ENCODE measurements at regions of chr1 and their contacts with region 1.

Region 1: GRCh38 chr1:155622191-155622590 is 12.2 kb downstream of the MSTO1 start:
- DNase-seq: no peak
- ATAC-seq: no peak
- H3K4me3 ChIP-seq: no peak overlapping the region
- H3K4me3 Mint-ChIP-seq: no peak overlapping the region
- H3K27ac ChIP-seq: no peak overlapping the region
- H3K27ac Mint-ChIP-seq: no peak overlapping the region
- H3K4me1 ChIP-seq: no peaks in the 10 kb centered on the region
- H3K4me1 Mint-ChIP-seq: no peaks in the 10 kb centered on the region
- H3K27me3 ChIP-seq: no peaks in the 10 kb centered on the region
- H3K27me3 Mint-ChIP-seq: no peaks in the 10 kb centered on the region
- CTCF ChIP-seq: no peak

Region 2: DNA sequence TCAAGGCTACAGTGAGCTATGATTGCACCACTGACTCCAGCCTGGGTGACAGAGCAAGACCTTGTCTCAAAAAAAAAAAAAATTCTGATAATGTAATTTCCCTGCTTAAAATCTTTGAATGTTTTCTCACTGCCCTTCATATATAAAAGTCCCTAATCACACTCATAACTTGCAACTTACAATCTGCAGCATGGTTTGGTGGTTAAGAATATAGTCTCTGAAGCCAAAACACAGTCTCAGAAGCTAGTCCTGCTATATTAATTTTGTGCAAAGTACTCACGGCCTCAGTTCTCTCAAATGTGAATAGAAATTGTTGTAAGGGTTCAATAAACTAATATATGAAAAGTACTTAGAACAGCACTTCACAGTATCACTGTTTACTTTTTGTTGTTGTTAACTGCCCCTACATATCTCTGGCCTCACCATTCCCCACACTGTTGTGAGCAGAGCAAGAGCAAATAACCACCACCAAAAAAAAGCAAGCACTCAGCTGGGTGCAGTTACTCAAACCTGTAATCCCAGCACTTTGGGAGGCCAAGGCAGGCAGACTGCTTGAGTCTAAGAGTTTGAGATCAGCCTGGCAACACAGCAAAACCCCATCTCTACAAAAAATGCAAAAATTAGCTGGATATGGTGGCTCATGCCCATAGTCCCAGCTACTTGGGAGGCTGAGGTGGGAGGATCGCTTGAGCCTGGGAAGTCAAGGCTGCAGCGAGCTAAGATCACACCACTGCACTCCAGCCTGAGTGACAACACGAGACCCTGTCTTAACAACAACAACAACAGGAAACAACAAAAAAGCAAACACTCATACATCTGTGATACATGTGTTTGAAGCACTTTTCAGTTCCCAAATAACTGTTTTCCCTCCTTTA is 82.0 kb before region 1 on chr1:
- CTCF ChIA-PET with region 1: no interaction called
- POLR2A ChIA-PET with region 1: no interaction called
- intact Hi-C with region 1: no loop called
- DNase-seq: peak in 1 of 9 experiments; percentile 26
- ATAC-seq: no peak
- H3K4me3 ChIP-seq: no peak overlapping the region
- H3K4me3 Mint-ChIP-seq: peak overlapping the region; percentile 27
- H3K27ac ChIP-seq: peak overlapping the region; percentile 21 to 62
- H3K27ac Mint-ChIP-seq: peak overlapping the region; percentile 83
- H3K4me1 ChIP-seq: peaks cover 44% of the 10 kb centered on the region
- H3K4me1 Mint-ChIP-seq: peaks cover 49% of the 10 kb centered on the region
- H3K27me3 ChIP-seq: no peaks in the 10 kb centered on the region
- H3K27me3 Mint-ChIP-seq: no peaks in the 10 kb centered on the region
- CTCF ChIP-seq: no peak

Region 3: DNA sequence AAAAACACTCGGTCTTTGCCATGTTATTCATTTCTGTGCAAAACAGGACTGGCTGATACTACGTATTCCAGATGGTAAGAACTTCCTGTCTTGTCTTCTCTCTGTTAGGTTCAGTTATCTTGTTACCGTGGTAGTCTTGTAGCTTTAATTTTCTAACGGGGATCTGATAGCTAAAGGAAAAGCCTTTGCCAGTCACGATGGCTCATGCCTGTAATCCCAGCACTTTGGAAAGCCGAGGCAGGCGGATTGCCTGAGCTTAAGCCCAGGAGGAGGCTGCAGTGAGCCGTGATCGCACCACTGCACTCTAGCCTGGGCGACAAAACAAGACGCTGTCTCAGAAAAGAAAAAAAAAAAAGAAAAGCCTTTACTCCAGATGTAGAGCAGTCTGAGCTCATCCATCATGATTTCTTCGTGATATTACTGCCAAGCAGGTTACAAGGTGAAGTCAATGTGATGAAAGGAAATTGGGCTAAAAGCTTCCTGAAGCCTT is 23.3 kb before region 1 on chr1:
- CTCF ChIA-PET with region 1: no interaction called
- POLR2A ChIA-PET with region 1: no interaction called
- intact Hi-C with region 1: loop called in 1 of 2 experiments (anchors 1 kb)
- DNase-seq: peak in 2 of 9 experiments; percentile 29 to 50
- ATAC-seq: peak; percentile 73
- H3K4me3 ChIP-seq: peak overlapping the region; percentile 10 to 11
- H3K4me3 Mint-ChIP-seq: peak overlapping the region; percentile 84
- H3K27ac ChIP-seq: no peak overlapping the region
- H3K27ac Mint-ChIP-seq: peak overlapping the region; percentile 94
- H3K4me1 ChIP-seq: no peaks in the 10 kb centered on the region
- H3K4me1 Mint-ChIP-seq: peaks cover 10% of the 10 kb centered on the region
- H3K27me3 ChIP-seq: no peaks in the 10 kb centered on the region
- H3K27me3 Mint-ChIP-seq: no peaks in the 10 kb centered on the region
- CTCF ChIP-seq: no peak

Region 4: GRCh38 chr1:155978325-155978972 is 356.3 kb after region 1 on chr1 and contains the start of gene ARHGEF2:
- CTCF ChIA-PET with region 1: no interaction called
- POLR2A ChIA-PET with region 1: no interaction called
- intact Hi-C with region 1: no loop called
- DNase-seq: peak; percentile 46 to 88 (median 79)
- ATAC-seq: peak; percentile 66
- H3K4me3 ChIP-seq: peak within 1 kb of the TSS; percentile 70 to 100
- H3K4me3 Mint-ChIP-seq: peak within 1 kb of the TSS; percentile 97
- H3K27ac ChIP-seq: peak within 1 kb of the TSS; percentile 59 to 91
- H3K27ac Mint-ChIP-seq: peak within 1 kb of the TSS; percentile 94
- H3K4me1 ChIP-seq: peaks cover 72% of the 10 kb centered on the region
- H3K4me1 Mint-ChIP-seq: peaks cover 69% of the 10 kb centered on the region
- H3K27me3 ChIP-seq: no peaks in the 10 kb centered on the region
- H3K27me3 Mint-ChIP-seq: no peaks in the 10 kb centered on the region
- CTCF ChIP-seq: no peak
- total RNA-seq, gene ARHGEF2: 51.6 to 52.3 TPM